A673 (cell line): ENCODE measurements at regions of chr4 and their contacts with region 1.

Region 1: DNA sequence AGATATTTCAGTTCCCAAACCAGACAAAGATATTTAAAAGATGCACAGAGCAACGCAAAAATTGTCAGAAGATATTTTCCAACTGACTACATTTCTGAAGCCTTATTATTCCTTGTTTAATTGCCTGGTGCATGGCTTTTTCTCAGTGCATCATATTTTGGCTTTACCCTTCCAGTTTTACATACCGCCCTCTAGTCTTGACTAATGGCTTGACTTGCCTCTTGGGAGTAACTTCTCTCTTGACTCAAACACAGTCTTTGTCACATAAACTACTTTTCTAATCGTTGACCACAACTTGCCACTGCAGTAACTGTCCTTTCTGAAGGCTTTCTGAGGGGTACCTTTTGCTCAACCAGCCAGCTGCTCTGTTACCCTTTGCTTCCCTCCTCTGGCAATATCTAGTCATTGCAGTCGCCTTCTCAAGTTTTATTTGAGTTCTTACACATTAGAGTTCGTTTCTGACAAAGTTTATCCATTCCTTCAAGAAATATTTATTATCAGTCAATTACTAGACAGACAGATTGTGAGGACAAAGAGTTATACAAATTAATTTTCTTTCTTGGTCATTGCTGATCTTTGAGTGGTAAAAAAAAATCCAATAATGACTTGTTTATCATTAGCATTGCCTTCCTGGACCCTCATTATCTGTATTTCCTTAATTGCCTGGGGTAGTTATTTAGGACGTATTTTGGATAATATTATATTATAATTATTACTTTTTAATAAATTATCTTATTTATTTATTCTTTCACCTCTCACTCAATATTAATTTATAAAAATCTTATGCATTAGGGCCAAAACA is 506.9 kb upstream of the PCDH10 start:
- DNase-seq: peak; percentile 61
- H3K4me3 ChIP-seq: no peak overlapping the region
- H3K27ac ChIP-seq: no peak overlapping the region
- H3K4me1 ChIP-seq: no peaks in the 10 kb centered on the region
- H3K27me3 ChIP-seq: no peaks in the 10 kb centered on the region
- CTCF ChIP-seq: peak; percentile 84

Region 2: DNA sequence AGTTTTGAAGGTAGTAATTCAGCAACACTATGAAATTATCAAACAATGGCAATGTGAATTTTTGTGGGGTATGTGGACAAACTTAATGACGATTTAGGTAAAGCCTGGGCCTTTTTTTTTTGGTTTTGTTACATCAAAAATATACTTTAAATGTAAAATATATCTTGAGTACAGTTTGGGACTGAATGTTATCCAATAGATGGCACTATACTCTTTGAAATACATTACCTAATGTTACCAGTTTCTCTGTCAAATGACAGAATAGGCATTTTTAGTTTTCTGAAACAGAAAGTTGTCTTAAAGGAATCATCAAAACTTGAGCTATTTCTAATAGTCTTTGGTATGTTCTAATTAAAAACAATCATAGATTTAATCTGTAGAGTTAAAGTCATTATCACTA is 1894.4 kb before region 1 on chr4:
- CTCF ChIA-PET with region 1: no interaction called
- POLR2A ChIA-PET with region 1: no interaction called
- intact Hi-C with region 1: loop called (anchors 10 kb)
- DNase-seq: peak; percentile 29
- H3K4me3 ChIP-seq: no peak overlapping the region
- H3K27ac ChIP-seq: no peak overlapping the region
- H3K4me1 ChIP-seq: no peaks in the 10 kb centered on the region
- H3K27me3 ChIP-seq: no peaks in the 10 kb centered on the region
- CTCF ChIP-seq: peak; percentile 61

Region 3: DNA sequence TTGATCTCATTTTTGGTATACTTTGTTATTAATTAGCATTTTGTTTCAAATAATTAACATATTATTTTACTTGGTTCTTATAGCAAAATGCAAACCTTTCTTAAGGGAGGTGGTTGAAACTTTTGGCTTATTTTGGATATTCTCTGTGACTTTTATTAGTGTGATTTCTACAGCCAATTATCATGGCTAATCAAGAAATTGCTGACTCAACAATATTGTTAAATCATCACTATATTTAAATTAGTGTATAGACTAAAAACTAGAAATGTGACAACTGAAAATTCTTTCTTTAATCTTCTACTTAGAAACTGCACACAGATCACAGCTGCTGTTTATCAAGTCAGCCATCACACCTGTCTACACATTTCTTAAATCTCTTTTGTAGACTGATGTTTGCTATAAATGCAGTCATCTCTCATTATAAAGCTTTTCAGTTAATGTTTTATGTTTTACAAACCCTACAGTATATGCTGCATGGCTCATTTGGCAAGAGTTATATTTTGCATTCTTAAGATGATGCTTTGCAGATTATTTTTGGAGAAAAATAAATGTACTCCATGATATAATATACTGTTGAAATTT is 117.1 kb after region 1 on chr4:
- CTCF ChIA-PET with region 1: no interaction called
- POLR2A ChIA-PET with region 1: no interaction called
- intact Hi-C with region 1: no loop called
- DNase-seq: no peak
- H3K4me3 ChIP-seq: no peak overlapping the region
- H3K27ac ChIP-seq: no peak overlapping the region
- H3K4me1 ChIP-seq: no peaks in the 10 kb centered on the region
- H3K27me3 ChIP-seq: no peaks in the 10 kb centered on the region
- CTCF ChIP-seq: no peak

Region 4: GRCh38 chr4:132982166-132982565 is 339.9 kb after region 1 on chr4:
- CTCF ChIA-PET with region 1: no interaction called
- POLR2A ChIA-PET with region 1: no interaction called
- intact Hi-C with region 1: no loop called
- DNase-seq: peak; percentile 9
- H3K4me3 ChIP-seq: no peak overlapping the region
- H3K27ac ChIP-seq: no peak overlapping the region
- H3K4me1 ChIP-seq: no peaks in the 10 kb centered on the region
- H3K27me3 ChIP-seq: no peaks in the 10 kb centered on the region
- CTCF ChIP-seq: no peak